ENCODE measurements at regions of chr12 and their contacts with region 1.

Region 1: DNA sequence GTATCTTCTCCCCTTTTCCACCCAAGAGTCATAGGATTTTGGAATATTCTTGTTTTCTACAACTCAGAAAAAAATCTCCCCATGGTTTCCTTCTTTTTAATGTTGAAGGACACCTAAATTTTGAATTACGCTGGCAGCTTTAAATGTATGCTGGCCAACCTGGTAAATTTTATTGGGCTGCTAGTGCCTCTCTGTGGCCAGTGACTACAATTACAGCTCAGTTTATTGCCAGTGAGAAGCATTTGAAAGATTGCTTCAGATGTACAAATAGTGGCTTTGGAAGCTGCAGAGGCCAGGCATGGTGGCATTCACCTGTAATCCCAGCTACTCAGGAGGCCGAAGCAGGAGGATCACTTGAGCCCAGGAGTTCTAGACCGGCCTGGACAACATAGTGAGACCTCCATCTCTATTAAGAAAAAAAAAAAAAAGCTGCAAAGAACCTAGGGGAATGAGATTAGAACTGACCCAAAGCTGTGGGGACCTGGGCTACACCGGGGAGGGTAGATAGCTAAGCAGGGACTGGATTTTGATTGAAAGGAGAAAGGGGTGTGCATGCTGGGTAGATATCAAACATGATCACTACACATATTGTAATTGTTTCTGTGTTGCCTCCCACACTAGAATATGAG is 7.6 kb upstream of the RAB21 start:
- DNase-seq: peak in 34 of 35 experiments; percentile 8 to 77 (median 32)
- ATAC-seq: peak; percentile 80 to 91 (median 84)
- H3K4me3 ChIP-seq: no peak overlapping the region
- H3K4me3 Mint-ChIP-seq: no peak overlapping the region
- H3K27ac ChIP-seq: no peak overlapping the region
- H3K27ac Mint-ChIP-seq: no peak overlapping the region
- H3K4me1 ChIP-seq: no peaks in the 10 kb centered on the region
- H3K4me1 Mint-ChIP-seq: no peaks in the 10 kb centered on the region
- H3K27me3 ChIP-seq: peaks cover 2 to 9% of the 10 kb centered on the region in 2 experiments
- H3K27me3 Mint-ChIP-seq: peaks cover 4 to 12% of the 10 kb centered on the region in 2 donors

Region 2: DNA sequence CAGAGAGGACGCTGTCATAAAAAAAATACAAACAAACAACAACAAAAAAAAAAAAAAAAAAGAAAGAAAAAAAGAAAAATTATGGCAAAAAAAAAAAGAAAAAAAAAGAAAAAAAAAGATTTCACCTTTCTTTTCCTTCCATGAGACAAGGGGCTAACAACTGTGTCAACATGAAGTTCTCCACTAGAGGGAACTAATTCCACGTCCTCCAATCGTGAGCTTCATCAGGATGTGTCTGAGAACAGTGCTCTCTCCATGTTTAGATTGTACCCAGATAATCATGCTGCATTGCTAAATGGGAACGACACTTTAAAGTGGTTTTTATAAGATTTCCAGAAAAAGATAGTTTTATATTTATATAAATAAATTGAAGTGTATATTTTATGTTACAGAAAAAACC is 1013.7 kb before region 1 on chr12:
- CTCF ChIA-PET with region 1: interaction called, 8 to 11 read pairs
- POLR2A ChIA-PET with region 1: no interaction called
- DNase-seq: peak in 1 of 35 experiments; percentile 41
- ATAC-seq: peak in 1 of 4 experiments; percentile 58
- H3K4me3 ChIP-seq: no peak overlapping the region
- H3K4me3 Mint-ChIP-seq: no peak overlapping the region
- H3K27ac ChIP-seq: no peak overlapping the region
- H3K27ac Mint-ChIP-seq: no peak overlapping the region
- H3K4me1 ChIP-seq: no peaks in the 10 kb centered on the region
- H3K4me1 Mint-ChIP-seq: no peaks in the 10 kb centered on the region
- H3K27me3 ChIP-seq: no peaks in the 10 kb centered on the region
- H3K27me3 Mint-ChIP-seq: peaks cover 5 to 10% of the 10 kb centered on the region in 2 donors

Region 3: DNA sequence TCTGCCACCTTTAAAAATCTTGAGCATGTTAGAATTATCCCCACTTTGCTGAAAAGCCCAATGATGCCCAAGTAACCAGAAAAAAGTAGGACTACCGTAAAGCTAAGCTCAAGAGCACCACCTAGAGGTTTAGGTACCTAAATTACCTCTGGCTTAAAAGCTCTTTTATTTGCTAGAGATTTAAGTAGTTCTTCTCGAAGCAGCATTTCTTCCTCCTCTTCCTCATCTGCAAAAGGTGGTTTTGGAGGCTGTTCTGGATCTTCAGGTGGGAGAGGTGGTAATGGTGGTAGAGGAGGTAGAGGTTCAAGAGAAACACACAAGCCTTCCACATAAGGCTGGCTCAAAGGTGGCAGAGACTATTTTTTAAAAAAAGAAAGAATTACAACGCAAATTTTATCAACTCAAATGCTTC is 110.4 kb before region 1 on chr12:
- CTCF ChIA-PET with region 1: interaction called, 13 to 44 read pairs
- POLR2A ChIA-PET with region 1: interaction called in 1 of 2 experiments, 5 read pairs
- DNase-seq: peak in 5 of 35 experiments; percentile 6 to 78 (median 24)
- ATAC-seq: peak in 3 of 4 experiments; percentile 57 to 65 (median 58)
- H3K4me3 ChIP-seq: no peak overlapping the region
- H3K4me3 Mint-ChIP-seq: peak overlapping the region in 1 of 3 donors; percentile 10
- H3K27ac ChIP-seq: no peak overlapping the region
- H3K27ac Mint-ChIP-seq: peak overlapping the region; percentile 47 to 66
- H3K4me1 ChIP-seq: no peaks in the 10 kb centered on the region
- H3K4me1 Mint-ChIP-seq: peaks cover 10 to 14% (median 12%) of the 10 kb centered on the region in 3 donors
- H3K27me3 ChIP-seq: no peaks in the 10 kb centered on the region
- H3K27me3 Mint-ChIP-seq: no peaks in the 10 kb centered on the region

Region 4: DNA sequence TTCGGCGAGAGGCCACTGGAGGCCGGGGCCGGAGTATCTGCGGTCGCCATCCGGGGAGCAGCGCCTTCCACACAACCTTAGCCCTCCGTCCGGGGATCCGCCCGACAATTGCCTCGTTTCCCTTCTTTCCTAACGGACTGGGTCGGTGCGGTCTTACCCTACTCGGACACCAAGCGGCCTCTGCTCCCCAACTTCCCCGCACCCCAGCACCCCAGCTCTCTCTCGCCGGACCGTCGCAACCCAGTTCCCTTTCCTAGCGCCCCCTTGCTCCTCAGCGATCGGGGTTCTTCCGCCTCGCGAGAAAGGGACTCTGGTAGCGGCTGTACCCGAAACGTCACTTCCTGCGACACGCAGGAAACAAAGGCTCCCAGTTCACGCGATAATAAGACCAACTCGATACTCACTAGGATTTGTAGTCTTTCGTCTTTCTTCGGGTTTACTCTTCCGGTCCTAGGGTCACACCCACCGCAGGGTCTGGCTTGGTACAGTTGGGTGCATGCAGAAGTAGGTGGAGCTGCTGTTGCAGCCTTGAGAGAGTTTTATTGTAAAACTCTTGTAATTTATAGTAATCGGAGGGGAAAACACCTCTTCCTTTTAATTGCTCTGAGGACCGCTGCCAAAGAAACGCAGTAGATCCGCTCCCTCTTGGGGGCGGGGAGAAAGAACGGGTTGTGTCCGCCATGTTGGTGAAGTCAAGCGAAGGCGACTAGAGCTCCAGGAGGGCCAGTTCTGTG is 83.4 kb before region 1 on chr12 and contains the start of gene ZFC3H1:
- CTCF ChIA-PET with region 1: interaction called, 3 to 36 read pairs
- POLR2A ChIA-PET with region 1: no interaction called
- DNase-seq: peak; percentile 79 to 98 (median 91)
- ATAC-seq: peak; percentile 85 to 89 (median 88)
- H3K4me3 ChIP-seq: peak within 1 kb of the TSS; percentile 82 to 99
- H3K4me3 Mint-ChIP-seq: peak within 1 kb of the TSS; percentile 93 to 100 (median 98)
- H3K27ac ChIP-seq: peak within 1 kb of the TSS; percentile 98
- H3K27ac Mint-ChIP-seq: peak within 1 kb of the TSS; percentile 93 to 99
- H3K4me1 ChIP-seq: peaks cover 12 to 23% of the 10 kb centered on the region in 2 experiments
- H3K4me1 Mint-ChIP-seq: peaks cover 56 to 65% (median 60%) of the 10 kb centered on the region in 3 donors
- H3K27me3 ChIP-seq: no peaks in the 10 kb centered on the region
- H3K27me3 Mint-ChIP-seq: no peaks in the 10 kb centered on the region
- total RNA-seq, gene ZFC3H1: 85.5 to 146 (median 106) TPM

Region 5: DNA sequence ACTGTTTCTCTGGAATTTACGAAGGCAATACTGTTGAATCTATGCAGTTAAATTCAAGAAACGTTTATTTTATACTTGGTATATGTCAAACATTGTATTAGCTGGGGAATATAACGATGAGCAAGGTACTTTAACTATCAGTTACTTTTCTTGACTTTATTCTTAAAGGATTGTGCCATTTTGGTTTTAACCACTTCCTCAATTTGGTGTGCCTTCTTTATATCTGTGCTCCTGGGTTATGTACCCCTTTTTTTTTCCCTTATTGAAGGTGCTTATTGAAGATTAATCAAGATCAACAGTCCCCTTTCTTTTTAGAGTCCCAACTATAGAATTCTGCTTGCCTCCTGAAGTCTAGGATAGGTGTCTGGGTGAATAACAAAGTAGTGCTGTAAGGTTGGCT is 13.4 kb after region 1 on chr12:
- CTCF ChIA-PET with region 1: interaction called, 6 to 11 read pairs
- POLR2A ChIA-PET with region 1: interaction called in 1 of 2 experiments, 5 read pairs
- DNase-seq: no peak
- ATAC-seq: no peak
- H3K4me3 ChIP-seq: no peak overlapping the region
- H3K4me3 Mint-ChIP-seq: peak overlapping the region in 1 of 3 donors; percentile 40
- H3K27ac ChIP-seq: no peak overlapping the region
- H3K27ac Mint-ChIP-seq: peak overlapping the region in 1 of 2 donors; percentile 34
- H3K4me1 ChIP-seq: peaks cover 12 to 13% of the 10 kb centered on the region in 2 experiments
- H3K4me1 Mint-ChIP-seq: peaks cover 61 to 75% (median 68%) of the 10 kb centered on the region in 3 donors
- H3K27me3 ChIP-seq: no peaks in the 10 kb centered on the region
- H3K27me3 Mint-ChIP-seq: no peaks in the 10 kb centered on the region

Region 6: GRCh38 chr12:71810905-71811304 is 63.8 kb after region 1 on chr12:
- CTCF ChIA-PET with region 1: no interaction called
- POLR2A ChIA-PET with region 1: no interaction called
- DNase-seq: no peak
- ATAC-seq: no peak
- H3K4me3 ChIP-seq: no peak overlapping the region
- H3K4me3 Mint-ChIP-seq: no peak overlapping the region
- H3K27ac ChIP-seq: no peak overlapping the region
- H3K27ac Mint-ChIP-seq: no peak overlapping the region
- H3K4me1 ChIP-seq: no peaks in the 10 kb centered on the region
- H3K4me1 Mint-ChIP-seq: no peaks in the 10 kb centered on the region
- H3K27me3 ChIP-seq: peaks cover 0 to 3% of the 10 kb centered on the region in 2 experiments
- H3K27me3 Mint-ChIP-seq: peaks cover 13 to 19% of the 10 kb centered on the region in 2 donors

Region 7: GRCh38 chr12:71840231-71840847 is 93.2 kb after region 1 on chr12:
- CTCF ChIA-PET with region 1: interaction called, 3 to 12 read pairs
- POLR2A ChIA-PET with region 1: interaction called, 3 to 10 read pairs
- DNase-seq: peak in 21 of 35 experiments; percentile 4 to 43 (median 21)
- ATAC-seq: peak; percentile 24 to 37 (median 30)
- H3K4me3 ChIP-seq: peak overlapping the region; percentile 86 to 97
- H3K4me3 Mint-ChIP-seq: peak overlapping the region; percentile 92 to 98 (median 97)
- H3K27ac ChIP-seq: peak overlapping the region; percentile 97
- H3K27ac Mint-ChIP-seq: peak overlapping the region; percentile 96 to 99
- H3K4me1 ChIP-seq: peaks cover 15 to 26% of the 10 kb centered on the region in 2 experiments
- H3K4me1 Mint-ChIP-seq: peaks cover 46 to 57% (median 55%) of the 10 kb centered on the region in 3 donors
- H3K27me3 ChIP-seq: peaks cover 0 to 3% of the 10 kb centered on the region in 2 experiments
- H3K27me3 Mint-ChIP-seq: peaks cover 0 to under 1% of the 10 kb centered on the region in 2 donors

Region 8: GRCh38 chr12:72330301-72330700 is 583.2 kb after region 1 on chr12:
- CTCF ChIA-PET with region 1: no interaction called
- POLR2A ChIA-PET with region 1: no interaction called
- DNase-seq: no peak
- ATAC-seq: no peak
- H3K4me3 ChIP-seq: no peak overlapping the region
- H3K4me3 Mint-ChIP-seq: no peak overlapping the region
- H3K27ac ChIP-seq: no peak overlapping the region
- H3K27ac Mint-ChIP-seq: no peak overlapping the region
- H3K4me1 ChIP-seq: no peaks in the 10 kb centered on the region
- H3K4me1 Mint-ChIP-seq: no peaks in the 10 kb centered on the region
- H3K27me3 ChIP-seq: no peaks in the 10 kb centered on the region
- H3K27me3 Mint-ChIP-seq: no peaks in the 10 kb centered on the region